ENCODE measurements at regions of chr3 and their contacts with region 1.

Region 1: DNA sequence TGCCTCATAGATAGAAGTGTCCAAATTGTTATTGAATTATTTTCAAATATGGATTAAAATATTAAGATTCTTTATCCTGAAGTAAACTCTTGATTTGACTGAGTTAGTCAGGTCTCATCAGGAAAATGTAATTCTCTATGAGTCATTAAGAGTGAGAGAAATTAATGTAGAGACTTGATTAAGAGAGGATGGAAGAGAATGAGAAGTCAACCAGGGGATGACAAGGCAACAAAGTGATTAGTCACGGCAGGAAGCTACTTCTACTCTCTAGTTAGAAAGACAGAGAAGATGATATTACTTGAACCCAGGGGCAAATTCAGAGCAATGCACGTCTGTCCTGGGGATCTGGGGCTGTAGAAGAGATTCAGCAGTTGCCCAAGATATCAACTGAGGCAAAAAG is 202.5 kb downstream of the LSAMP start:
- DNase-seq: no peak
- ATAC-seq: no peak
- H3K4me3 ChIP-seq: no peak overlapping the region
- H3K27ac ChIP-seq: no peak overlapping the region
- H3K4me1 ChIP-seq: no peaks in the 10 kb centered on the region
- H3K27me3 ChIP-seq: no peaks in the 10 kb centered on the region
- CTCF ChIP-seq: no peak

Region 2: DNA sequence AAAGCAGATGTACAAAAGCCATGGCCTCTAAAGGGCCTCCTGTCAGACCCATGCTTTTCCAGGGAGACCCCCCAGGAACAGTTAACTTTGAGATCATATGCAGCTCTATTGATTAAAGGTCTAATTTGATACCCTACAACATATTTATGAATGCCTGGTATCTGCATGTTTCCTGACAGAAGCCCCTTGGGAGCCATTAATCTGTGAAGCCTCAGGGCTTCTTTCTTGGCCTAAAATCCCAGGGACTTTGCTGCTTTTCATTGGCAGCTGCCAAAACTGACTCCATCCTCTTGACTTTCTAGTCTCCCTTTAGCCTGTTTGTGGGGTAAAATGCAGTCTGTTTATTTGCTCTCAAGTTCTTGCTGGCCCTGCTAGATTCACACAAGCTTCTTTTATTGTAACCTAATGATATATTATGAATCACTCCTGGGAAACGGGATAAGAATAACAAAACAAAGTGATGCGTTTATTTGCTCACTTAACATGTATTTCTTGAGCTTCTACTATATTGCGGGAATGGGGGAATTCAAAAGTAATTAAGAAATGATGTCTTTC is 54.5 kb before region 1 on chr3:
- intact Hi-C with region 1: no loop called
- DNase-seq: no peak
- ATAC-seq: no peak
- H3K4me3 ChIP-seq: no peak overlapping the region
- H3K27ac ChIP-seq: no peak overlapping the region
- H3K4me1 ChIP-seq: no peaks in the 10 kb centered on the region
- H3K27me3 ChIP-seq: no peaks in the 10 kb centered on the region
- CTCF ChIP-seq: no peak

Region 3: DNA sequence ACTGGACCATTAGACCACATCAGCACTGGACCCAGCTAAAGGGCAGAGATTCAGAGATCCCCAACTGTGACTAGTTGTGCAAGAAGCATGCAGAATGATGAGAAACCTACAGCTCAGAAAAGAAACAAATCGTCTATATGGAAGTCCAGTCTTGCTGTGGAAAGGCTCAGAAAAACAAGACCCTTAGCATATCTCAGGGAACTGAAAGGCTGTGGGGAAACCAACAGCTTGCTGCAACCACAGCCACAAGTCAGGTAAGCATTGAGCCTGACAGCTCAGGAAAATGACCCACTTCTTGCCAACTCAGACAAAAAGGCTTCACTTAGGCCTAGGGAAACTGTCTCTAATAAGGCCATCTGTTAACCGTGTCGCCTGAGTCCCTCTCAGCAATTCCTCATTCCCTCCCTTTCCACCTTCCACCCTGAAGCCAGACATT is 56.8 kb after region 1 on chr3:
- intact Hi-C with region 1: no loop called
- DNase-seq: no peak
- ATAC-seq: no peak
- H3K4me3 ChIP-seq: no peak overlapping the region
- H3K27ac ChIP-seq: no peak overlapping the region
- H3K4me1 ChIP-seq: no peaks in the 10 kb centered on the region
- H3K27me3 ChIP-seq: no peaks in the 10 kb centered on the region
- CTCF ChIP-seq: no peak

Region 4: DNA sequence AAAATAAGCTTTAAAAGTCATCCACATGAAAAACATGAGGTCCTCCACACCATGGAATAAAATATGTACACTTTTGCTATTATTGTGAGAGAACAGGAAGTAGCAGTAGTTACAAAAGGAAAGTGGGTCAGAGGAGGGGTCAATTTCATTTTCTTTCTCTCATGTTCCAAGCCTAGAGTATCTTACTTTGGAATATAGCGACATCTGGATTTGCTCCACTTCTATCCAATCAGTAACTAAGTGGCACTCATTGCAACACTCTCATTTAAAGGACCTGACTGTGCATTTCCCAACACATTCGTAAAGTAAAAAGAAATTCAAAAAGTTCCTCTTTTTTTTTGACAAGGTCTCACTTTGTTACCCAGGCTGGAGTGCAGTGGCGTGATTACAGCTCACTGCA is 1104.1 kb after region 1 on chr3:
- intact Hi-C with region 1: loop called in 1 of 2 experiments (anchors 5 kb)
- DNase-seq: no peak
- ATAC-seq: no peak
- H3K4me3 ChIP-seq: no peak overlapping the region
- H3K27ac ChIP-seq: no peak overlapping the region
- H3K4me1 ChIP-seq: no peaks in the 10 kb centered on the region
- H3K27me3 ChIP-seq: no peaks in the 10 kb centered on the region
- CTCF ChIP-seq: no peak

Measured in psoas muscle (tissue), 8 donors.